Left lung (tissue), 14 donors: ENCODE measurements at regions of chr4 and their contacts with region 1.

Region 1: DNA sequence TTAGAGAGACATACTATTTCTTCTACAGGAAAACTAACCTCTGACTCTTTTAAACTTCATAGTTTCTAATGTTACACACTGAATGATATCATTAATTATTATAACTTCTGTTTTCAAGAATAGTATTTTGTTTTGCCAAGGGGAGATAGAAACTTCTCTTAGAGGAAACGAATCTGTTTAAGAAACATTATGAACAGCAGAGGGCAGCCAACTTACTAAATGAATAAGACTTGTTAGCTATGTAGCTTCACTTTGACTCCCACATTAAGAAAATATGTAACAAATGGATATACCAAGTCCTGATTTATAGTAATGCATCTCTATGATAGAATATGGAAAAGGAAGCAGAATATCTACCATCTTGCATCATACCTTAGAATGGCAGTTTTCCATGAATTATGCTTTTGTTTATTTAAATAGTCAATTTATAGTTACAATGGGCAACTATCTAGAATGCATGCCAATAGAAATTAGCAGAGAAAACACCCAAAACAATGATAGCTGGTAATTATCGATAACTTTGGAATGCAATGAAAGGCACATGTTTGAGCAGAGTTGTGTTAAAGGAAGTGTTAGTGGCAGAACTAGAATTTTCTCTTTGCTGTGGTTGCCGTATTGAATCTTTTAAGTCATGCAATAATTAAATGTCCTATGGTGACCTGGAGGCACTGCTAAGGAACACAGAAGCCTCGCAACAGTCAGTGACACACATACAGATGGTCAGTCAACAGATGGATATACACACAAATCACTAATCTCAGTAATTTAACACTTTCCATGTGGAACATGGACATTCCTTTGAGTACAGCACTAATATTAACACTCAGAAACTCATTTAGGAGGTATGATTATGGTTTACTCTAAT is 105.7 kb upstream of the PDLIM3 start:
- DNase-seq: peak in 2 of 4 donors; percentile 45 to 66
- ATAC-seq: peak; percentile 48
- H3K4me3 ChIP-seq: no peak overlapping the region
- H3K27ac ChIP-seq: no peak overlapping the region
- H3K4me1 ChIP-seq: no peaks in the 10 kb centered on the region
- H3K27me3 ChIP-seq: peaks cover 0 to 27% of the 10 kb centered on the region in 2 donors
- CTCF ChIP-seq: peak; percentile 27 to 39

Region 2: DNA sequence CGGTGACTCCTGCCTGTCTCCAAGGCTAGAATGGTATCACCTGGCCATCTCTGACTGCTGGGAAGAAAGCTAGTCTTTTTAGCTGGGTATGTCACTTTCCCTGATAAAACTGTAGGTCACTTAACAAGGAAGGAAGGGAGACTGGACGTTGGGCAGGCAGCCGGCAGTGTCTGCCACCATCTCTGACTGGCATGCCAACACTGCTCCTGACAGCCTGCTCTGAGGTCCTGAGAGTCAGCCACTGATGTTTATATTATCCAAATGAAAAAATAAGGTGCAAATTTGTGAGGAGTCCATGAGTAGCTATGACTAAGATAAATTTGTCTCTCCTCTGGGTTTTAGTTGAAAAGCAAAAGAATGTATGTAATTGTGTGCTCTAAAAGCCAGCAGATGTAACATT is 354.5 kb before region 1 on chr4:
- intact Hi-C with region 1: no loop called
- DNase-seq: no peak
- ATAC-seq: peak; percentile 8
- H3K4me3 ChIP-seq: no peak overlapping the region
- H3K27ac ChIP-seq: peak overlapping the region; percentile 20 to 26
- H3K4me1 ChIP-seq: peaks cover 5 to 14% of the 10 kb centered on the region in 2 donors
- H3K27me3 ChIP-seq: no peaks in the 10 kb centered on the region
- CTCF ChIP-seq: no peak

Region 3: DNA sequence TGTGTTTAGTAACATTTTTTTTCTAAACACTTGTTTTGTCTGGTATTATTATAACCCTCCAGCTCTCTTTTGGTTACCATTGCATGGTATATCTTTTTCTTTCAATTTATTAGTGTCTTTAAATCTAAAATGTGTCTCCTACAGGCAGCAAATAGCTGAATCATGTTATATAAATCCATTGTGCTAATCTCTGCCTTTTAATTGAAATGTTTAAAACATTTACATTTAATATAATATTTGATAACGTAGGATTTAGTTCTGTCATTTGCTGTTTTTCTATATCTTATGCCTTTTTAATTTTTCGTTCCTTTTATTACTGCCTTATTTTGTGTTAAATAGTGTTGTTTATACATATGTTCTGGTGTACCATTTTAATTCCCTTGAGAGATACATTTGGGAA is 152.4 kb before region 1 on chr4:
- intact Hi-C with region 1: no loop called
- DNase-seq: no peak
- ATAC-seq: no peak
- H3K4me3 ChIP-seq: no peak overlapping the region
- H3K27ac ChIP-seq: no peak overlapping the region
- H3K4me1 ChIP-seq: no peaks in the 10 kb centered on the region
- H3K27me3 ChIP-seq: no peaks in the 10 kb centered on the region
- CTCF ChIP-seq: no peak

Region 4: DNA sequence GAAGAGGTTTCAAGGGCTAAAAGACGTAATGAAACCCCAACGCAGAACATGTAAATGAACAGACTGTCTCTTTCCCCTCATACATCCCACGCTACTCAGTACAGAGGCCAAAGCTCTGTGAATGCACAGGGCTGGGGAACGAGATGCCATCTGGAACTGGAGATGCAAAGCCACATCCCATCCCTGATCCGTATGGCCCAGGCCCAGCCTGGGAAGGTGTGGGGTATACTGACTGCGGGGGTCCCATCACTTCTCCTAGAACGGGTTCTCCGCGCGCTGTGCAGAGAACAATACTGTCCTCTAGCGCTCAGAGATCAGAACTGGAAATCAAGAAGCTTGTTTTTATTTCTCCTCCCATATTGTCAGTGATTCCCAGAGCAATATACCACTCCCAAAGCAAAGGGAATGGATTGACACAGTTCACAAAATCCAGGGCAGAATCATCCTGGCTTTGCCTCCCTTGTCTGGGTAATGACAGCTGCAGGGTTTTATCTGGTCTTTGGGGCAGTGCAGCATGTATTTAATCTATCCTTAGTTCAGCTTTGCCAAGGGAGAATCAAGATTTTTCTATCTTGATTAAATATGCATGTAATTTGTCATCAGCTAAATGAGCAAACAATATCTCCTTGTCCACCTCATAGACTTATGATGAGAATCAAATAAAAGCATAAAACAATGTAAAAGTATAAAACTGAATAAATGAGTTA is 380.6 kb after region 1 on chr4:
- intact Hi-C with region 1: loop called in 1 of 2 experiments (anchors 5 kb)
- DNase-seq: peak in 2 of 4 donors; percentile 49 to 56
- ATAC-seq: peak; percentile 82
- H3K4me3 ChIP-seq: no peak overlapping the region
- H3K27ac ChIP-seq: no peak overlapping the region
- H3K4me1 ChIP-seq: no peaks in the 10 kb centered on the region
- H3K27me3 ChIP-seq: no peaks in the 10 kb centered on the region
- CTCF ChIP-seq: peak in 1 of 2 donors; percentile 72

Region 5: DNA sequence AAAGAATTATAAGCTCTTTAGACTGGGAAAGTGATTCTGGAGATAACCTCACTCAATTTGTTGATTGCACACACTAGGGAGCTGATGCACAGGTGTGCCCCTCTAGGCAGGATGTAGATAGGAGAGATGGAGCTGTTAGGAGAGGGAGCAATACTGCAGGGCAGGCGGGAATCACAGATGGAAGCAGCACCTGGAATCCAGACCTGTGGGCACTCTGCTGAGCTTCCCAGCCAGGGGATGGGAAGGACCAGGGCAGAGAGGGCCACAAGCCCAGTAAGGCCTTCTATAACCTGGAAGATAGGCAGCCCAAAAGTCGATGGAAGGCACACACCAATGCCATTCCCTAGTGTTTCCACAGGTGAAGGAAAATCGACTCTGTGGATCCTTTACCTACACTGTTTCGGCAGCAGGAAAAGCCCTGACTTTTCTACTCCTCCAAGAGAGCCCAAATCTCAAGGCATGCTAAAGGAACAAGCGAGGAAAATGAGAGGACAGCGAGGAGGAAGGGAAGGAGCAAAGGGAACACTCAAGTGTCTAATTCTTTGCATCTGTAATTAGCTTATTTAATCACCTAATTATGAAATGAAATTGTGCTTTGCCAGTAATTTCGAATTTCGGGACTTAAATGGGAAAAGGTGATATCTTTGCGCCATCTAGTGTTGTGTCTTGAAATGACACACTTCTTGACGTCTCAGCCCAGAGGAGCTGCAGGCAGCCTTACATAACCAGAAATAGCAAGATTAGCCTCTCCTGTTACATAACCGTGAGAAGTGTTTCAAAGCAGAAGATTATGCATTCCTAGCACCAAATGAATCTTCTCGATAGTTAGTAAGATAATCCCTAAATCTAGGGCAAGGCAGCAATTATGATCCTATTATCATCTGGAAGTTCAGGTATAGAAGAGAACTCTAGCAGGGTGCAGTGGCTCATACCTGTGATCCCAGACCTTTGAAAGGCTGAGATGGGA is 396.9 kb after region 1 on chr4:
- intact Hi-C with region 1: loop called in 1 of 2 experiments (anchors 5 kb)
- DNase-seq: peak in 2 of 4 donors; percentile 77 to 90
- ATAC-seq: peak; percentile 89
- H3K4me3 ChIP-seq: no peak overlapping the region
- H3K27ac ChIP-seq: no peak overlapping the region
- H3K4me1 ChIP-seq: peaks cover 0 to 7% of the 10 kb centered on the region in 2 donors
- H3K27me3 ChIP-seq: peaks cover 0 to 6% of the 10 kb centered on the region in 2 donors
- CTCF ChIP-seq: peak; percentile 64 to 83